Colonic mucosa (tissue), 4 donors: ENCODE measurements at regions of chr2 and their contacts with region 1.

Region 1: DNA sequence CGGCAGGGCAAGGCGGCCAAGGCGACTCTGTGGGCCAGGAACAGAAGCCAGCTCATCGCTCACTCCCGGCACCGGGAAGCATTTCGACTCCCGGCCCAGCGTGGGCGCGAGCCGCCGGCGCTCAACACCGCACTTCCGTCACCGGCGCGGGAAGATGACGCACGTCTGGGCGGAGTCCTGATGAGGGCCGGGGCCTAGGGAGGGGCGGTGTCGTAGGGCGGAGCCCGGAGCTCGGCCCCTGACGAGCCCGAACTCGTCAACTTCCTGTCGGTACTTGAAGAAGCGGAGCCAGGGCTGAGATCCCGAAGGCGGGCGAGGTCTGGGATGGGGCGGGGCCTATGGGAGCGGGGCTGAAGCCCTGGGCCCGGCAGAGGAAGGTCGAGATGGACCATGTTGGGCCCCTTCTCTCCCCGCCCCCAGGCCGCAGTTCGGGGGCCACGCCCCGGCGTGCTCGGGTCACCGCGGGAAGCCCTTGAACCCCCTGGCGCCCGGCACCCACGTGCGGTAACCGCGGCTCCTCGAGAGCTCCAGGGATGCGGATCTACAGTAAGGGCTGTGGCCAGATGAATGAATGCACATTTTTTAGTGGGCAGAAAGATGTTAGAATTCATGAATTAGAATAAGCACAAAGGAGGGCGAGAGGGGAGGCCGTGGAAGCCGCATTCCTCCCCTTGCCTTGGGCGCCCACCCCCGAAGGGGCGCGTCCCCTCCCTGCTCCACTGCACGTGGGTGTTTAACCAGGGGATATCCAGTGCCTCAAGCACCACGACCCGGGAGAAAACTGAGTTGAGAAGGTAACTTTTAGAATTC is at the start of gene RNASEH1:
- DNase-seq: peak; percentile 99
- H3K4me3 ChIP-seq: peak within 1 kb of the TSS; percentile 100
- H3K27ac ChIP-seq: peak within 1 kb of the TSS; percentile 86
- H3K4me1 ChIP-seq: peaks cover 7% of the 10 kb centered on the region
- H3K27me3 ChIP-seq: no peaks in the 10 kb centered on the region
- CTCF ChIP-seq: no peak
- total RNA-seq, gene RNASEH1: 13.3 to 18.8 TPM

Region 2: DNA sequence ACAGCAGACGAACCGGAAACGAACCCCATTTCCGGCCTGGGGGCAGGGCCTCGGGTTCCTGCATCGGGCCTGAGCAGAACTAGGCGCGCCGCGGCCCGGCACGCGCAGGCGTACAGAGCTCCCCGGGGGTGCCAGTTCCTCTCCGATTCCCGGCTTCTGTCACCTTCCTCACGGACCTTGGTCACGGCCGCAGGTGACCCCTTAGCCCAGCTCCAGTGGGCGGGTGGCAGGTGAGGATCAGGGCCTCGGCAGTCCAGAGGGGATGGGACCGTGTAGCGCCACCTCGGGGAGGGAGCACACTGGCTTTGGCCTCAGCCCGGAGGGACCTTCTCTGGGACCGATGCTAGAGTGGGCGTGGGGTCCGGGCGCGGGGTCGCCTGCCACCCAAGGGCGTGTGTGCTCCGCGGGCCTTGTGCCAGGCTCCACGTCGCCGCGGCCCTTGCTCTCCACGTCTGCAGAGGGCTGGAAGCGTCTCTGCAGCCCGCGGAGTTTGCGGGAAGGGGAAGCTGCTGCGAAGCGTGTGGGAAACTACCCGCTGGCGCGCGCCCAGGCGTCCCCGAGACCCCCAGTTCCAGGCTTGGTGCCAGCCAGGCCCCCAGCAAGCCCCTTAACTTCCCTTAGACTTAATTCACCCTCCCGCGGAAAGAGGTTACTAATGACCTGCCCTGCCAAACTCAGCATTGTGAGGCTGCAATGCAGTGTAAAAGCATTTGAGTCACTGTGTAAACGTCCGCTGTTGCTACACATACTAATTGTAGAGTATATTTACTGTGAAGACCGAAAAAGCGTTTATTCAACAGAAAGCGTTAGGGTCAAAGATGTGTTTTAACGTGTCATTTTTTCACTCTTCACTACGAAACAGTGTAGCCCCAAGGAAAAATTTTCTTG is 178.5 kb before region 1 on chr2 and contains the start of gene TRAPPC12:
- intact Hi-C with region 1: loop called (anchors 5 kb)
- DNase-seq: peak; percentile 96
- H3K4me3 ChIP-seq: peak within 1 kb of the TSS; percentile 96
- H3K27ac ChIP-seq: peak within 1 kb of the TSS; percentile 89
- H3K4me1 ChIP-seq: peaks cover 5% of the 10 kb centered on the region
- H3K27me3 ChIP-seq: no peaks in the 10 kb centered on the region
- CTCF ChIP-seq: peak; percentile 16
- total RNA-seq, gene TRAPPC12: 59.1 to 91.5 TPM

Region 3: GRCh38 chr2:3519255-3520205 is 38.9 kb before region 1 on chr2 and contains the start of gene ADI1:
- intact Hi-C with region 1: loop called (anchors 5 kb)
- DNase-seq: peak; percentile 89
- H3K4me3 ChIP-seq: peak within 1 kb of the TSS; percentile 76
- H3K27ac ChIP-seq: peak within 1 kb of the TSS; percentile 97
- H3K4me1 ChIP-seq: peaks cover 12% of the 10 kb centered on the region
- H3K27me3 ChIP-seq: no peaks in the 10 kb centered on the region
- CTCF ChIP-seq: no peak
- total RNA-seq, gene ADI1: 83.2 to 83.5 TPM